Ascending aorta (tissue), 2 donors: ENCODE measurements at regions of chr19 and their contacts with region 1.

Region 1: DNA sequence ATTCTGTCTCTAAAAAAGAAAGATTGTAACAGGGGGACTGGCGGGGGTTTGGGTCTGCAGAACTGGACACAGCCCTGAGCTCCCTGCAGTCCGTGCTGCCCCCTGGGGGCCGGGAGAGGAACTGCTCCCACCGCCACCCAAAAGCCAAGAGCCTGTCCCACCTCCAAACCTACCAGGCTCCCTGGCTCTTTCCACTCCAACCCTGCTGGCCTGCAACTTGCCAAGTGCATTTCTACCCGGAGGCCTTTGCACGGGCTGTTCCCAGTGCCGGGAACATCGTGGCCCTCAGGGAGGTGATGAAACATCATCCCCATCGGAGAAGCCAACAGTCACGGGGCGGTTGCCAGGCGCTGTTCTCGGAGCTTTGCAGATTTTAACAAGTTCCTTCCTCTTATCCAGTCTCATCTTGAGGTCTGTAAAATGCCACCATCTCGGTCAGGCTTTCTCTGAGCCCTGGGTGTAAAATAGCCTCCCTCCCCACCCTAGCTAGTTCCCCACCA is 50.7 kb downstream of the SMIM24 start:
- DNase-seq: peak; percentile 94 to 98
- H3K4me3 ChIP-seq: no peak overlapping the region
- H3K27ac ChIP-seq: peak overlapping the region; percentile 87 to 91
- H3K4me1 ChIP-seq: peaks cover 18 to 31% of the 10 kb centered on the region in 2 donors
- H3K27me3 ChIP-seq: no peaks in the 10 kb centered on the region
- CTCF ChIP-seq: peak; percentile 99 to 100 (median 99)

Region 2: DNA sequence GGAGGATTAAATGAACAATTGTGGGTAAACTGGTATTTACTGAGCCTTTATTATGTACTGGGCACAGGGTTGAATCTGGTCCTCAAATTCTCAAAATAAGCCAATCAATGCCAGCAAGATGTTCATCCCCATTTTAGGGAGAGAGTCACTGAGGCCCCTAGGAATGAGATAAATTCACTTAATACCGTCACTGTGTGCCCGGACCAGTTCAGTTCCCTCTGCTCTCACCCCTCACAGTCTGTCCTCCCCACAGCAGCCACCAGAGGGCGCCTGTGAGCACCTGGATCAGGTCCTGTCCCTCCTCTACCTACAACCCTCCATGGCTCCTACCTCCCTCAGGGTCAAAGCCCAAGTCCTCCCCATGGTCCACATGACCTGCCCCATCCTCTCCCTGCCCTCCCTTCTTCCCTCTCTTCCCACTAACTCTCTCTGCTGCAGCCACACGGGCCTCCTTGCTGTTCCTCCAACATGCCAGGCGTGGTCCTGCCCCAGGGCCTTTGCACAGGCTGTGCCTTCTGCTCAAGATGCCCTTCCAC is 105.2 kb before region 1 on chr19:
- intact Hi-C with region 1: loop called (anchors 2 kb)
- DNase-seq: no peak
- H3K4me3 ChIP-seq: no peak overlapping the region
- H3K27ac ChIP-seq: no peak overlapping the region
- H3K4me1 ChIP-seq: no peaks in the 10 kb centered on the region
- H3K27me3 ChIP-seq: no peaks in the 10 kb centered on the region
- CTCF ChIP-seq: peak; percentile 40 to 68 (median 64)

Region 3: DNA sequence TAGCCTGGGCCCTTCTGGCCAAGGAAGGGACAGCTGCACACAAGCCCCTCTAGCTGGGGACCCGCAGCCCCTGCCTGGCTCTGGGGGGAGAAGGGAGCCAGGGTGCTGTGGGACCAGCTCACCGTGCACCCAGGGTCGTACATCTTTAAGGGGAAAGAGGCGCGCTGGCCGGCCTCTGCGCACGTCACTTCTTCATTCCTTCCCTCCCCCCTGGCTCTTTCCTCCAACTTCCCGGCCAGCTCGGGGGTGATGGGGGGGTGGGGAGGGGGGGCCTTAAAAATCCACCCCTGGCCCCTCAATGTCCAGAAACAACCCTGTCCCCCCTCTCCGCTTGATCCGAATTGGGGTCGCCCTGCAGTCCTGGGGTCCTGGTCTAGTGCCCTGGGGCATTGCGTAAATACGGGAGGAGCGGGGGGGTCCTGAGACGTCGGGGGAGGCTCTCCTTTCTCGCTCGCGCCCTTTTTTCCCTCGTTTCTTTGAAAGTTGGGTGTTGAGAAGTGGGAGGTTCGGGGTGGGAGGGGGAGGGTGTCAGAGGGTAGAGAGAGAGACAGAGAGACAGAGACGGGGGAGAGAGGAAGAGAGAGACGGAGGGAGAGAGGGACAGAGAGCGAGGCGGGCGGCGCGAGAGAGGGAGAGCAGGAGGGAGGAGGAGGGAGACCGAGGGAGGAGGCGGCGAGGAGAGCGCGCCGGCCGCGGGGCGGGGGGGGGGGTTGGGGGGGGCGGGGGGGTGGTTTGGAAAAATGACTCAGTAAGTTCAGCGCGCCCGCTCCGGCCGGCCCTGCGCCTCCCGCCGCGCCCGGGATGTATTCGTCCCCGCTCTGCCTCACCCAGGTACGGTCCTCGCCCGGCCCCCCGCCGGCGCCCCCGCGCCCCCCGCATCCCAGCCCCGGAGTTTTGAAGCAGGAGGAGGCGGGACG is 63.5 kb before region 1 on chr19 and contains the start of gene NFIC:
- intact Hi-C with region 1: loop called (anchors 2 kb)
- DNase-seq: peak in 1 of 2 donors; percentile 90
- H3K4me3 ChIP-seq: peak within 1 kb of the TSS; percentile 99
- H3K27ac ChIP-seq: peak within 1 kb of the TSS; percentile 100
- H3K4me1 ChIP-seq: peaks cover 18 to 37% of the 10 kb centered on the region in 2 donors
- H3K27me3 ChIP-seq: no peaks in the 10 kb centered on the region
- CTCF ChIP-seq: no peak
- total RNA-seq, gene NFIC: 194 TPM

Region 4: DNA sequence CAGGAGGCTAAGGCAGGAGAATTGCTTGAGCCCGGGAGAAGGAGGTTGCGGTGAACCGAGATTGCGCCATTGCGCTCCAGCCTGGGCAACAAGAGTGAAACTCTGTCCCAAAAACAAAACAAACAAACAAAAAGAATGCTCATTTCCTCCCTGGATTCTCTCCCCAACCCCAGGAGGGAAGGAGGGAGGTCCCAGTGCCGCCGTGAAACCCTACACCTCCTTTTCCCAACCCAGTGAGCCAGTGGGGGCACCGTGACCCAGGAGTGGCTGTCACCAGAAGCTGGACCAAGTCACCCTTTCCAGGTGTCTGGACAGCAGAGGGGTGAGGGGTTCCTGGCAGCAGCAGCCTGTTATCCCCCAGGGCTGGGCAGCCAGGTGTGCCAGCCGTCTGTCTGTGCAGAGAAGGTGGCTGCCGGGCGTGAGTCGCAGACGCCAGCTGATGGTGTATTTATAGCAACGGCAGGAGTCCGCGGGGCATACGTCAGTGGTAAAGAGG is 39.7 kb before region 1 on chr19:
- intact Hi-C with region 1: no loop called
- DNase-seq: no peak
- H3K4me3 ChIP-seq: no peak overlapping the region
- H3K27ac ChIP-seq: peak overlapping the region; percentile 75 to 84
- H3K4me1 ChIP-seq: peaks cover 18 to 49% of the 10 kb centered on the region in 2 donors
- H3K27me3 ChIP-seq: no peaks in the 10 kb centered on the region
- CTCF ChIP-seq: no peak

Region 5: DNA sequence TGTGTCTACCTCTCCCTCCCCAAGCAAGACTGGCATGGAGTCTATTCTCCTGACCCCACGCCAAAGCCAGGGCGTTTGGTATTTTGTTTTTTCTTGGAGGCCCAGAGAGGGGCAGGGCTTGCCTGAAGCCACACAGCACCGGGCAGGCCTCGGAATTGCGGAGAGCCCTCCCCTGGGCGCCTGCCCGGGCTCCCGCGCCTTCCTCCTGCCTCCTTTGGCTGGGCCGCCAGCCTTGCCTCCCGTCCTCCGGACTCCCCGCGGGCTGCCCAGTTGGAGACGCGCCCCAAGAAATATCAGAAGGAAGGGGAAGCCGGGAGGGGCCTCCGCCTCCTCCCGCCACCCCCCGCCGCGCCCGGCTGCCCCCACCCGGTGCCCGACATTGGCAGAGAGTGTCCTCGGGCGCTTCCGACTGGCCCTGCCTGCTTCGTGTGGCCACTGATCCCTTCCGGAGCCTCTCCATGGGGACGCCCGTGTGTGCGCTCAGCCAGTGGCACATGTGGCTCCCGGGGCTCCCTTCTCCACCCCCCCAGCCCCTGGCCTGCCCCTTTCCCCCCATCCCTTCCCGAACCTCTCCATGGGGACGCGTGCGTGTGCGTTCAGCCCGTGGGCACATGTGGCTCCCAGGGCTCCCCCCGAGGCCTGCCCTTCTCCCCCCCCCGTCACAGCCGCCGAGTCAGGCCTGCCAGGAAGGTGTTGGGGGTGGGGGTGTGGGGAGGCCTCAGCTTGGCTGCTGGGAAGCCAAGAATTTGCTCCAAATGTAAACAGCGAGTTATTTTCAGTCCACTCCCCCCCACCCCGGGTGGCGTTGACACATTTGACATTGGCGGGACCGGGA is 25.9 kb before region 1 on chr19:
- intact Hi-C with region 1: loop called (anchors 1 kb)
- DNase-seq: peak; percentile 81 to 97
- H3K4me3 ChIP-seq: peak overlapping the region; percentile 60 to 65
- H3K27ac ChIP-seq: peak overlapping the region; percentile 98 to 100
- H3K4me1 ChIP-seq: peaks cover 6 to 58% of the 10 kb centered on the region in 2 donors
- H3K27me3 ChIP-seq: no peaks in the 10 kb centered on the region
- CTCF ChIP-seq: no peak

Region 6: DNA sequence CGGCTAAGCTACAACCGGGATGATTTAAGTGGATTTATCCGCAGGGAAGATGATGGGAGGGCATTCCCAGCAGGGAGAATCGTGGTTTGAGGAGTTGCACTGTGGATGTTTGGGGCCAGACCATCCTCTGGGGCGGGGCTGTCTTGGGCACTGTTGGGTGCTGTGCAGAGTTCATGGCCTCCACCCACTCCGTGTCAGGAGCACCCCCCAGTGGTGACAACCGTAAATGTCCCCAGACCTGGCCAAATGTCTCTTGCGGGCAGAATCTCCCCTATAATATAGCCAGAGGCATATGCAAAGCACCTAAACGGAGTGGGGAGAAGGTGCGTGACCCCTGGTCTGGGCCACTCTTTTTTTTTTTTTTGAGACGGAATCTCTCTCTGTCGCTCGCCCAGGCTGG is 10.5 kb after region 1 on chr19:
- intact Hi-C with region 1: no loop called
- DNase-seq: no peak
- H3K4me3 ChIP-seq: no peak overlapping the region
- H3K27ac ChIP-seq: no peak overlapping the region
- H3K4me1 ChIP-seq: peaks cover 3 to 25% of the 10 kb centered on the region in 2 donors
- H3K27me3 ChIP-seq: no peaks in the 10 kb centered on the region
- CTCF ChIP-seq: peak; percentile 12 to 42 (median 13)

Region 7: DNA sequence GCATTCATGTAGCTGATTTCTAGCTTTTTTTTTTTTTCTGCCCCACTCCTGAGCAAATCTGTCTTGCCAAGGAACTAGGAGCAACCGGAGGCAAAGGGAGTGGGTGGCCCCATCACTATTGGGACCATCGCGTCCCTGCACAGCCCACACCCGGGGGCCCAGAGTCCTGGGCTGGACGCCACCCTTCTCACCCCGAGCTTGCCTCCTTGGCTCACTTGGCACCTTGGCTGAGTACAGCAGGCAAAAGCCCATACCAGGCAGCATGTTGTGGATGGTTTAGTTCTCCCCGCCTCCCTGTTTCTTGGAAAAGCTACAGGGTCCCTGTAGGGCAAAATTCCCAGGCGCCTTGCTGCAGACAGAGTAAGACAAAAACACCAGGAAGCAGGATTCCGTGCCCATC is 37.0 kb after region 1 on chr19:
- intact Hi-C with region 1: loop called (anchors 2 kb)
- DNase-seq: peak; percentile 53 to 89
- H3K4me3 ChIP-seq: peak overlapping the region in 1 of 2 donors; percentile 14
- H3K27ac ChIP-seq: peak overlapping the region; percentile 80 to 99
- H3K4me1 ChIP-seq: peaks cover 9 to 45% of the 10 kb centered on the region in 2 donors
- H3K27me3 ChIP-seq: no peaks in the 10 kb centered on the region
- CTCF ChIP-seq: no peak